Mammary epithelial cell (primary cell): ENCODE measurements at regions of chr1 and their contacts with region 1.

Region 1: GRCh38 chr1:13801232-13801631 is 101.2 kb downstream of the PRDM2 start:
- DNase-seq: peak; percentile 93
- H3K4me3 ChIP-seq: no peak overlapping the region
- H3K27ac ChIP-seq: peak overlapping the region; percentile 8
- H3K4me1 ChIP-seq: peaks cover 11% of the 10 kb centered on the region
- H3K27me3 ChIP-seq: no peaks in the 10 kb centered on the region
- CTCF ChIP-seq: no peak

Region 2: GRCh38 chr1:13748610-13749505 is 52.4 kb before region 1 on chr1:
- CTCF ChIA-PET with region 1: no interaction called
- dilution Hi-C with region 1: no loop called
- in situ Hi-C with region 1: no loop called
- intact Hi-C with region 1: loop called (anchors 5 kb)
- DNase-seq: peak; percentile 96
- H3K4me3 ChIP-seq: peak overlapping the region; percentile 62 to 96 (median 77)
- H3K27ac ChIP-seq: peak overlapping the region; percentile 61
- H3K4me1 ChIP-seq: peaks cover 6% of the 10 kb centered on the region
- H3K27me3 ChIP-seq: no peaks in the 10 kb centered on the region
- CTCF ChIP-seq: peak in 1 of 2 donors; percentile 10